ENCODE measurements at regions of chr2 and their contacts with region 1.

Region 1: DNA sequence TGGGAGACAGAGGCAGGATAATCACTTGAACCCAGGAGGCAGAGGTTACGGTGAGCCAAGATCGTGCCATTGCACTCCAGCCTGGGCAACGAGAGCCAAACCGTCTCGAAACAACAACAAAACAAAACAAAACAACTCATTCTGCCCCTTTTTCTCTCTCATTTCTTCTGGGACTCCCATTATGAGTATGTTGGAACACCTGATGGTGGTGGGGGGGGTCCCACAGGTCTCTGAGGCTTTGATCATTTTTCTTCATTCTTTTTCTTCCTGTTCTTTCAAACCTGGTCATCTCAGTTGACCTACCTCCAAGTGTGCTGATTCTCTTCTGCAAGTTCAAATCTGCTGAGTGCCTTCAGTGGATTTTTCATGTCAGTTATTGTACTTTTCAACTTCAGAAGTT is 8.2 kb upstream of the FAM161A start:
- DNase-seq: no peak
- ATAC-seq: no peak
- H3K4me3 ChIP-seq: no peak overlapping the region
- H3K27ac ChIP-seq: no peak overlapping the region
- H3K4me1 ChIP-seq: no peaks in the 10 kb centered on the region
- H3K27me3 ChIP-seq: no peaks in the 10 kb centered on the region
- CTCF ChIP-seq: no peak
- POLR2A ChIP-seq: no peak
- RAD21 ChIP-seq: no peak

Region 2: GRCh38 chr2:60834270-60834962 is 1027.7 kb before region 1 on chr2:
- CTCF ChIA-PET with region 1: no interaction called
- POLR2A ChIA-PET with region 1: no interaction called
- dilution Hi-C with region 1: no loop called
- in situ Hi-C with region 1: no loop called
- intact Hi-C with region 1: no loop called
- DNase-seq: no peak
- ATAC-seq: no peak
- H3K4me3 ChIP-seq: no peak overlapping the region
- H3K27ac ChIP-seq: no peak overlapping the region
- H3K4me1 ChIP-seq: no peaks in the 10 kb centered on the region
- H3K27me3 ChIP-seq: peaks cover 30% of the 10 kb centered on the region
- CTCF ChIP-seq: no peak
- POLR2A ChIP-seq: no peak
- RAD21 ChIP-seq: no peak

Region 3: GRCh38 chr2:61493523-61493942 is 368.6 kb before region 1 on chr2:
- CTCF ChIA-PET with region 1: no interaction called
- POLR2A ChIA-PET with region 1: no interaction called
- dilution Hi-C with region 1: no loop called
- in situ Hi-C with region 1: loop called (anchors 10 kb)
- intact Hi-C with region 1: no loop called
- DNase-seq: peak; percentile 40
- ATAC-seq: no peak
- H3K4me3 ChIP-seq: no peak overlapping the region
- H3K27ac ChIP-seq: no peak overlapping the region
- H3K4me1 ChIP-seq: peaks cover 9% of the 10 kb centered on the region
- H3K27me3 ChIP-seq: no peaks in the 10 kb centered on the region
- CTCF ChIP-seq: no peak
- POLR2A ChIP-seq: no peak
- RAD21 ChIP-seq: no peak

Region 4: DNA sequence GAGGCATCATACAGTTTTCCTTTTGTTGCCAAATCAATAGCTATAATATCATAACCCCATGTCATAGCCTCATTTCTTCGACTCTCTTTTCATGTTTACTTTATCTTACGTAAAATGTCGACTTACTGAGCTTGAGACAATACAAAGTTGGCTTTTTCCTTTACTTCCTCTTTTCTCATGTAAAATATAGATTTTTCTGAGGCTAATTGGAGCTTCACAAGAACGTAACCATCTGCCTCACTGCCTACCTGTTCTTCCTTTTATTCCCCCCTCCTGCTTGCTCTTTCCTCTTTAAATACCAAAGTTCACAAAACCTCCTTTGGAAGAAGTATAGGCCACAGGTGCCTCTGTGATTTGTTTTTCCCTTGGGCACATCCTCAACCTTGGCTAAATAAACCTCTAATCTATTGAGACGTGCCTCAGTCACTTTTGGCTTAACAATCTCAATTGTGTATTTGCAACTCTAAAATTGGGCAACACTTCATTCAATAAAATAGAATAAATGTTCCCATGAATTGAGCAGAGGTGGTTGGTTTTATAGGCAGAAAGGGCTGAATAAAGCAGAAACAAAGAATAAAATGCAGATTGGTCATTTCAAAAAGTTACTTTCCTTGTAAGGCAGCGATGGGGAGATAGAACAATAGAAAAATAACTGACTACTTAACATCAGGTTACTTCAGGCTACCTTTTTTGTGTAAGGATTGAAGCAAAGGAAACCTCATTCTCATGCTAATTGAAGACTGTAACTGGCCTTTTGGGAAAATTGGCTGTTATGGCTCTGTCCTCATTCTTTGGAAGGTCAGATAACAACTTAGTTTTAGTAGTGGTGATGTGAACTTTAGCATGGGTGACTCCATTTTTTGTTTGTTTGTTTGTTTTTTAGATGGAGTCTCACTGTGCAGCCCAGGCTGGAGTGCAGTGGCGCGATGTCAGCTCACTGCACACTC is 64.7 kb after region 1 on chr2:
- CTCF ChIA-PET with region 1: no interaction called
- POLR2A ChIA-PET with region 1: no interaction called
- dilution Hi-C with region 1: no loop called
- in situ Hi-C with region 1: no loop called
- intact Hi-C with region 1: no loop called
- DNase-seq: no peak
- ATAC-seq: no peak
- H3K4me3 ChIP-seq: no peak overlapping the region
- H3K27ac ChIP-seq: no peak overlapping the region
- H3K4me1 ChIP-seq: peaks cover 4% of the 10 kb centered on the region
- H3K27me3 ChIP-seq: no peaks in the 10 kb centered on the region
- CTCF ChIP-seq: no peak
- POLR2A ChIP-seq: no peak
- RAD21 ChIP-seq: no peak

Region 5: GRCh38 chr2:62055724-62056336 is 193.7 kb after region 1 on chr2:
- CTCF ChIA-PET with region 1: no interaction called
- POLR2A ChIA-PET with region 1: no interaction called
- dilution Hi-C with region 1: no loop called
- in situ Hi-C with region 1: no loop called
- intact Hi-C with region 1: no loop called
- DNase-seq: no peak
- ATAC-seq: no peak
- H3K4me3 ChIP-seq: no peak overlapping the region
- H3K27ac ChIP-seq: no peak overlapping the region
- H3K4me1 ChIP-seq: no peaks in the 10 kb centered on the region
- H3K27me3 ChIP-seq: no peaks in the 10 kb centered on the region
- CTCF ChIP-seq: no peak
- POLR2A ChIP-seq: no peak
- RAD21 ChIP-seq: no peak

Measured in IMR-90 (cell line).